ENCODE measurements at regions of chr16 and their contacts with region 1.

Region 1: DNA sequence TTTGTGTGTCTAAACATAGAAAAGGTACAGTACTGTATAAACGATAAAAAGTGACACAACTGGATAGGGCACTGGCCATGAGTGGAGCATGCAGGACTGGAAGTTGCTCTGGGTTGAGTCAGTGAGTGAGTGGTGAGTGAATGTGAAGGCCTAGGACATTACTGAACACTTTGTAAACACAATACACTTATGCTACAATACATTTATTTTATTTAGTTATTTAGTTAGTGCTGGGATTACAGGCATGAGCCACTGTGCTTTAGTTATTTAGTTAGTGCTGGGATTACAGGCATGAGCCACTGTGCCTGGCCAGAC is 4.6 kb downstream of the CFAP20 start:
- DNase-seq: no peak
- ATAC-seq: no peak
- H3K4me3 ChIP-seq: no peak overlapping the region
- H3K27ac ChIP-seq: no peak overlapping the region
- H3K4me1 ChIP-seq: peaks cover 71% of the 10 kb centered on the region
- H3K27me3 ChIP-seq: no peaks in the 10 kb centered on the region
- CTCF ChIP-seq: no peak
- POLR2A ChIP-seq: no peak

Region 2: DNA sequence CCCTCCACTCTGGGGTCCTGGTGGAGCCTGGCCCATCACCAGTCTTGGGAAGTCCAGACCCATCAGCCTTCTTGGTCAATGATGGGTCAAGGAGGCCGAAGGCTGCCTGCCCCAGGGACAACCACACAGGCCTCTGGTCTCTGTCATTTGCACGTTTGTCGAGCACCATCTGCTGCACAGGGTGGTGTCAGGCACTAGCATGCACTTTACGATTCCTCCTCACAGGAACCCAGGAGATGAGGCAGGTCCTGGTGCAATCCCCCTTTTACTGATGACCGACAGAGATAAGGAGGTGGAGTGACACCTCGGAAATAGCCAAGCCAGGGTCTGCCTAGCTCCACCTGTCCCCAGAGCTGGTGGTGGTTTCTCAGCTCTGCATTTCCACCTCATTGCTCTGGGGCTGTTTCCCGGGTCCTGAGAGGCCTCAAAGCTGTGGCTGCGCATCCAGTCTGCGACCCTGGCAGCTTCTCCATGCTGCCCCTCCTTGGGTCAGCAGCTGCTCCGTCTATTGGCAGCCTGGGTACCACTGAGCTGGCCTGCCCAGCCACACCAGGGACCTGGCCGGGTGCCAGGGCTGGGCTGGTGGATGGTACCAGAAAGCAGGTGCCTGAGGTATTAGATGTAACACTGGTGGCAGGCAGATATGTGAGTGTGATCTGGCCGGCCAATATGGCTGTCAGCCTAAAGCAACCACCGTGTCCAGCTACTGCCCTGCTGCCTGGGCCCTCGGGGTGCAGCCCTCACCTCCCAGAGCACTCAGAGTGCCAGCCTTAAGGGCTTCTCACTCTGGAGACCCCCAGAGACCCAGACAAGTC is 89.0 kb before region 1 on chr16:
- intact Hi-C with region 1: loop called (anchors 5 kb)
- DNase-seq: peak in 1 of 4 donors; percentile 28
- ATAC-seq: no peak
- H3K4me3 ChIP-seq: no peak overlapping the region
- H3K27ac ChIP-seq: peak overlapping the region in 1 of 4 donors; percentile 91
- H3K4me1 ChIP-seq: peaks cover 61% of the 10 kb centered on the region
- H3K27me3 ChIP-seq: no peaks in the 10 kb centered on the region
- CTCF ChIP-seq: no peak
- POLR2A ChIP-seq: no peak

Measured in body of pancreas (tissue), 4 donors.